ENCODE measurements at regions of chr19 and their contacts with region 1.

Region 1: DNA sequence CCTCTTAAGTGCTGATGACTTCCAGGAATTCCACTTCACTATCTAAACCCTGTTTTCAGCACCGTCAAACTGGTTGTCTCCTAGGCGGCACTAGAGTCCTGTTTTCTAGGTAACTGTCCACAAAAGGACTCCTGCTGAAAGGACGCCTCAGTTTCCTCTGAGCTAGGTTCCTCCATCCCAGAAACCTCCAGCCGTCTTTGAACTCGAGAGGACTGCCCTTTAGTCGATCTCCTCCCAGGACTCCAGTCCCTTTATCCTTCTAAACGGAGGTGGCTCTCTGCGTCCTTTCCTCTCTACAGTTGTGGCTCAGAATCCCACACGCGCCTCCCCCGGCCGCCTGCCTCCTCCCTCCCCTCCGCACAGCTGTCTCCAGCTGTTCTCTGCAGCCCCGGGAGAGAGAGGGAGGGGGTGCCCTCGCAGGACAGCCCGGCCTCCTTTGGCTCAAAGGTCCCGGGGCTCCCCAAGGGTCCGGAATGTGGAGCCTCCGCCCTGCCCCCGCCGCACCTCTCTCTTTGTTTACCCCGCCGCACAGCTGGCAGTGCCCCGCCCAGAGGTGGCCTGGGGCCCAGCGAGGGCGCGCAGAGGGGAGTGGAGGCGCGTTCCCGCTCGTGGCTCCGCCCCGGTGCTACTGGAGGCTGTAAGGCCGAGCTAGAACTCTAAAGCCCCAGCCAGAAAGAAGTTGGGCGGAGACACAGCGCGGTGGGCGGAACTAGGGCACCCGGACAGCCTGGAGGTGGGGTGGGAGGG is 2.4 kb downstream of the LTBP4 start:
- DNase-seq: peak; percentile 94 to 100
- H3K4me3 ChIP-seq: peak overlapping the region; percentile 63; the same call in 1 of the 2 replicates
- H3K27ac ChIP-seq: no peak overlapping the region
- H3K4me1 ChIP-seq: peaks cover 41% of the 10 kb centered on the region
- H3K27me3 ChIP-seq: peaks cover 29% of the 10 kb centered on the region
- CTCF ChIP-seq: no peak

Region 2: DNA sequence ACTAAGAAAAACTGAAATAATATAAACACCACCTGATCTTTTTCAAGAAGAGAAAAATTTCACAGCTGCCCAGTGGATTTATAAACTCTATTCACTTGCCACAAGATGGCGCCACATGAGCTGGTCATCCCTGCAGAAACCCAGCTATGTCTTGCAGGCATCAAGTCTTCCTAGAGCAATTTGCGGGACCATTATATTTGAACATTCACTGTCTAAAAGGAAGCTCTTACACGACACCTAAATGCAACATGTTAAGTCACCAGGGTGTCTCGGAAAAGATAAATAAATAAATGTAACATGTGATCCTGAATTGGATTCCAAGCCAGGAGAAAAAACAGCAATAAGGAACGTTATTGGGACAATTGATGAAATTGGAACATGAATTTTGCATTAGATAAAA is 298.2 kb before region 1 on chr19:
- CTCF ChIA-PET with region 1: interaction called, 13 read pairs
- POLR2A ChIA-PET with region 1: no interaction called
- intact Hi-C with region 1: loop called (anchors 2 kb)
- DNase-seq: peak; percentile 67 to 74
- H3K4me3 ChIP-seq: no peak overlapping the region
- H3K27ac ChIP-seq: no peak overlapping the region
- H3K4me1 ChIP-seq: no peaks in the 10 kb centered on the region
- H3K27me3 ChIP-seq: no peaks in the 10 kb centered on the region
- CTCF ChIP-seq: peak; percentile 86

Region 3: GRCh38 chr19:40502647-40503319 is 100.8 kb before region 1 on chr19:
- CTCF ChIA-PET with region 1: no interaction called
- POLR2A ChIA-PET with region 1: no interaction called
- intact Hi-C with region 1: no loop called
- DNase-seq: peak; percentile 46 to 54
- H3K4me3 ChIP-seq: no peak overlapping the region
- H3K27ac ChIP-seq: no peak overlapping the region
- H3K4me1 ChIP-seq: no peaks in the 10 kb centered on the region
- H3K27me3 ChIP-seq: peaks cover 23% of the 10 kb centered on the region
- CTCF ChIP-seq: peak; percentile 55; the same call in 1 of the 2 replicates

Region 4: DNA sequence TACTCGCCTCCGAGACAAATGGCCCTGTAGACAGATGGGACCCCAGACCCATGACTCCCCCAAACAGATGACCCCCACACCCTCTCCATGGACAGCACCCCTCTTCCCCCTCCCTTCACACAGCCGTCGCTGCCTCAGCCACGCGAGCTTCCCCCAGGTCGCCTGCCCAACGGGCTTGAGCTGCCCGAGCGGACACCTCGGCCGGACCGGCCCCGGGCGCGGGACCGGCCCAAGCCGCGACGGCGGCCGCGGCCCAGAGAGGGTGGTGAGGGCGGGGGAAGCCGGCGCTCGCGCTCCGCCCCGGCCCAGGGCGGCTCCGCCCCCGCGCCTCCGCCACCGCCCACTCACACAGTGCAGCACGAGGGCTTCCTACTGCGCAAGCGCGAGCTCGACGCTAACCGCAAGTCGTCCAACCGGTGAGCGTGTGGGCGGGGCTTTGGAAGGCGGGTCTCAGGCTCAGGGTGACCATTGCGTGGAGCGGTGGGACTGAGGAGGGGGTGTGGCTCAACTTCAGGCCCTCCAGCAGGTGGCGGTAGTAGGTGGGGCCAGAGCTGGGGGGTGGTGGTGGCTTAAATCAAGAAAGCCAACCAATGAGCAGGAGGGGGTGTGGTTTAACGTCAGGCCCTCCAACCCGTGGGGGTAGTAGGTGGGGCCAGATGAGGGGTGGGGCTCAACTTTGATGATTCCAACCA is 33.1 kb before region 1 on chr19:
- CTCF ChIA-PET with region 1: interaction called, 3 read pairs
- POLR2A ChIA-PET with region 1: no interaction called
- intact Hi-C with region 1: loop called (anchors 2 kb)
- DNase-seq: peak; percentile 96 to 99
- H3K4me3 ChIP-seq: peak overlapping the region; percentile 76
- H3K27ac ChIP-seq: peak overlapping the region; percentile 68
- H3K4me1 ChIP-seq: peaks cover 7% of the 10 kb centered on the region
- H3K27me3 ChIP-seq: no peaks in the 10 kb centered on the region
- CTCF ChIP-seq: no peak

Region 5: GRCh38 chr19:40614622-40615411 is 11.3 kb after region 1 on chr19:
- CTCF ChIA-PET with region 1: interaction called, 19 read pairs
- POLR2A ChIA-PET with region 1: interaction called, 12 read pairs
- intact Hi-C with region 1: loop called (anchors 1 kb)
- DNase-seq: peak; percentile 83 to 91
- H3K4me3 ChIP-seq: peak overlapping the region; percentile 86
- H3K27ac ChIP-seq: peak overlapping the region; percentile 70
- H3K4me1 ChIP-seq: peaks cover 19% of the 10 kb centered on the region
- H3K27me3 ChIP-seq: no peaks in the 10 kb centered on the region
- CTCF ChIP-seq: no peak

Region 6: GRCh38 chr19:40813182-40813958 is 209.8 kb after region 1 on chr19:
- CTCF ChIA-PET with region 1: interaction called, 18 read pairs
- POLR2A ChIA-PET with region 1: no interaction called
- intact Hi-C with region 1: no loop called
- DNase-seq: peak in 1 of 2 experiments; percentile 48
- H3K4me3 ChIP-seq: no peak overlapping the region
- H3K27ac ChIP-seq: no peak overlapping the region
- H3K4me1 ChIP-seq: no peaks in the 10 kb centered on the region
- H3K27me3 ChIP-seq: no peaks in the 10 kb centered on the region
- CTCF ChIP-seq: no peak

Region 7: DNA sequence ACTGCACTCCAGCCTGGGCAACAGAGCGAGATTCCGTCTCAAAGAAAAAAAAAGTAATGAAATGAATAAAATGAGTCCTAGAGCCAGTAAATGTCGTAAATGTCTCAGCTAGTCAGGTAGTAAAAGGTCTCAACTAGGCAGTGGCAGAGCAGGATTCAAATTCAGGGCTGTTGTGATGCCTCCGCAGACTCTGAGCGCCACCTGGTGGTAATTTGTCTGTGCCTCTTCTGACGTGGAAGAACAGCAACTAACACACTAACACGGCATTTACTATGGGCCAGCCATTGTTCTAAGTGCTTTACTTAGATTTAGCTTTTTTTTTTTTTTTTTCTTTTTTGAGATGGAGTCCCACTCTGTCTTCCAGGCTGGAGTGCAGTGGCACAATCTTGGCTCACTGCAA is 540.8 kb after region 1 on chr19:
- CTCF ChIA-PET with region 1: interaction called, 11 read pairs
- POLR2A ChIA-PET with region 1: no interaction called
- intact Hi-C with region 1: no loop called
- DNase-seq: peak; percentile 64 to 75
- H3K4me3 ChIP-seq: no peak overlapping the region
- H3K27ac ChIP-seq: no peak overlapping the region
- H3K4me1 ChIP-seq: no peaks in the 10 kb centered on the region
- H3K27me3 ChIP-seq: no peaks in the 10 kb centered on the region
- CTCF ChIP-seq: peak; percentile 90

Region 8: GRCh38 chr19:41226053-41226873 is 622.7 kb after region 1 on chr19:
- CTCF ChIA-PET with region 1: no interaction called
- POLR2A ChIA-PET with region 1: interaction called, 12 read pairs
- intact Hi-C with region 1: no loop called
- DNase-seq: peak; percentile 75 to 97
- H3K4me3 ChIP-seq: peak overlapping the region; percentile 61
- H3K27ac ChIP-seq: peak overlapping the region; percentile 78
- H3K4me1 ChIP-seq: peaks cover 52% of the 10 kb centered on the region
- H3K27me3 ChIP-seq: no peaks in the 10 kb centered on the region
- CTCF ChIP-seq: no peak

Measured in PC-9 (cell line).